ENCODE measurements at regions of chr11 and their contacts with region 1.

Region 1: GRCh38 chr11:118592616-118593367 is 14.6 kb upstream of the PHLDB1 start:
- DNase-seq: no peak
- ATAC-seq: no peak
- H3K4me3 ChIP-seq: no peak overlapping the region
- H3K4me3 Mint-ChIP-seq: no peak overlapping the region
- H3K27ac ChIP-seq: no peak overlapping the region
- H3K27ac Mint-ChIP-seq: no peak overlapping the region
- H3K4me1 ChIP-seq: no peaks in the 10 kb centered on the region
- H3K4me1 Mint-ChIP-seq: peaks cover 9% of the 10 kb centered on the region
- H3K27me3 ChIP-seq: no peaks in the 10 kb centered on the region
- H3K27me3 Mint-ChIP-seq: no peaks in the 10 kb centered on the region
- CTCF ChIP-seq: no peak

Region 2: GRCh38 chr11:118359295-118359958 is 233.4 kb before region 1 on chr11 and contains the start of gene UBE4A:
- CTCF ChIA-PET with region 1: no interaction called
- POLR2A ChIA-PET with region 1: no interaction called
- intact Hi-C with region 1: no loop called
- DNase-seq: peak; percentile 97
- ATAC-seq: peak; percentile 91
- H3K4me3 ChIP-seq: peak within 1 kb of the TSS; percentile 82 to 98 (median 92)
- H3K4me3 Mint-ChIP-seq: peak within 1 kb of the TSS; percentile 98
- H3K27ac ChIP-seq: peak within 1 kb of the TSS; percentile 73 to 93
- H3K27ac Mint-ChIP-seq: peak within 1 kb of the TSS; percentile 96
- H3K4me1 ChIP-seq: peaks cover 18 to 23% of the 10 kb centered on the region in 2 donors
- H3K4me1 Mint-ChIP-seq: peaks cover 39% of the 10 kb centered on the region
- H3K27me3 ChIP-seq: no peaks in the 10 kb centered on the region
- H3K27me3 Mint-ChIP-seq: no peaks in the 10 kb centered on the region
- CTCF ChIP-seq: no peak
- total RNA-seq, gene UBE4A: 37.3 and 37.7 TPM in 2 replicates

Region 3: DNA sequence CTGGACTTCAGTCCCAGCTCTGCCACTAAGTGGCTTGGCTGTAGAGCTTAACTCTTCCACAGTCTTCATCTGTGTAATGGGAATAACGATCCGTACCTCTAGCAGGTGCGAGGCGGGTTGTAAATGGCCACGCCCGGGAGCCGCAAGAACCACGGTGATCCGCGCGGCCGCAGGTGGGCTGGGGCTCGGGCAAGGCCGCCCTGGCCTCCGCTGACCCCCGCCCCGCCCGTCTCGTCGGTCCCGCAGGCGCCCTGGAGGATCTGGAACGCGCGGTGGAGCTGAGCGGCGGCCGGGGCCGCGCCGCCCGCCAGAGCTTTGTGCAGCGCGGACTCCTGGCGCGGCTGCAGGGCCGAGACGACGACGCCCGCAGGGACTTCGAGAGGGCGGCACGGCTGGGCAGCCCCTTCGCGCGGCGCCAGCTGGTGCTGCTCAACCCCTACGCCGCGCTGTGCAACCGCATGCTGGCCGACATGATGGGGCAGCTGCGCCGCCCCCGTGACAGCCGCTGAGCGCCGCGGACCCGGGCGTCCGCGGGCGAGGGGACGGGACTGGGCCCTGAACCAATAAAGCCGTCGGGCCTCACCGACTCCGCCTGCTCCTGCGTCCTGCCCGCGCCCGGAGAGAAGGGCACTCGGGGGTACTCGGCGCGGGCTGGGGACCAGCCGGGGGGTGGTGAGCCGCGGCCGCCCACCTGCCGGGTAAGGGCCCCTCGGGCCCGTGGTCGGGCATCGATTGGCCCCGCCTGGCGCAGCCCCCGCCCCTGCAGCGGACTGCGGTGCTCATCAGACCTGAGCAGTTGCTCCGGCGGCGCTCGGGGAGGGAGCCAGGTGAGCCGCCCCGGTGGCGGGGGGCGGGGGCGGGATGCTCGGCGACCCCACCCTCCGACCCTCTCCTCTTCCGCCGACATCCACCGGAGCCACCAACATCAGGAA is 62.1 kb before region 1 on chr11 and contains the start of gene TMEM25:
- CTCF ChIA-PET with region 1: no interaction called
- POLR2A ChIA-PET with region 1: no interaction called
- intact Hi-C with region 1: no loop called
- DNase-seq: peak; percentile 72
- ATAC-seq: peak; percentile 84
- H3K4me3 ChIP-seq: peak within 1 kb of the TSS; percentile 1 to 87 (median 73)
- H3K4me3 Mint-ChIP-seq: peak within 1 kb of the TSS; percentile 97
- H3K27ac ChIP-seq: peak within 1 kb of the TSS in 1 of 2 donors; percentile 42
- H3K27ac Mint-ChIP-seq: peak within 1 kb of the TSS; percentile 86
- H3K4me1 ChIP-seq: peaks cover 14 to 21% of the 10 kb centered on the region in 2 donors
- H3K4me1 Mint-ChIP-seq: peaks cover 24% of the 10 kb centered on the region
- H3K27me3 ChIP-seq: no peaks in the 10 kb centered on the region
- H3K27me3 Mint-ChIP-seq: no peaks in the 10 kb centered on the region
- CTCF ChIP-seq: no peak
- total RNA-seq, gene TMEM25: 16.3 and 16.9 TPM in 2 replicates

Region 4: DNA sequence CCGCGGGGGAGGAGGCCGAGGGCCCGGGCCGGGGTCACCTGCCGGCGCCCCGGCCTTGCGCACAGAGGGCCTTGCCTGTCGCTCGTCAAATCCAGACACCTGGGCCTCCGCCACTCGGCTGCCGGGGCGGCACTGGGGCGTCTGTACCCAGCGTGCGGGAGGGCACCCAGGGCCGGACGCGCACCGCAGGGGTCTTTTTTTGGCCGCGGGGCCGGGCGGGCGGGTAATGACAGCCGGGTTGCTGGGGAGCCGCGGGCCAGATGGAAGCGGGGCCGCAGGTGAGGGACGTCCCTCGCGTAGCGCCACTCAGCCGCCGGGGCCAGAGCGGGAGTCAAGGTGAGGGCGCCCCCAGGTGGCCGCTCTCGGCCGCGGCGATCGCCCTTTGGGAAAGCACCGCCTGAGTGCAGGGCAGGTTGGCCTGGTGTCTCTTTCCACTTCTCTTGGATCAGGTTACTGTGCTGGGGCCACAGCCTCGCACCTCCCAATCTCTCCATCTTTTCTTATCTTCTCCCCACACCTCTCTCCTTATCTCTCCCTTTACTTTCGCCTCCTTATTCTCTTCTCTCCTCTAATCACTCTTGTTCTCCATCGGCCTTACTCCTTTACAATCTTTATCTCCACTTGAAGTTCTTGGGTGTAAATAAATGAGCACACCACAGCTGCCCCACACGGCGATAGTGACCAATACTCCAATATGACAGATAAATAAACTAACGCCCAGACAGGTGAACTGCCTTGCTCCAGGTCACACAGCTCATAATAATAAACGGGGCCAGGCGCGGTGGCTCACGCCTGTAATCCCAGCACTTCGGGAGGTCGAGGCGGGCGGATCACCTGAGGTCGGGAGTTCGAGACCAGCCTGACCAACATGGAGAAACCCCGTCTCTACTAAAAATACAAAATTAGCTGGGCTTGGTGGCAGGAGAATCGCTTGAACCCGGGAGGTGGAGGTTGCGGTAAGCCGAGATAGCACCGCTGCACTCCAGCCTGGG is 18.3 kb after region 1 on chr11:
- CTCF ChIA-PET with region 1: interaction called, 8 read pairs
- POLR2A ChIA-PET with region 1: interaction called, 3 read pairs
- intact Hi-C with region 1: loop called (anchors 2 kb)
- DNase-seq: peak; percentile 89
- ATAC-seq: peak; percentile 59
- H3K4me3 ChIP-seq: peak overlapping the region in 4 of 5 experiments; percentile 35 to 60 (median 52)
- H3K4me3 Mint-ChIP-seq: peak overlapping the region; percentile 75
- H3K27ac ChIP-seq: no peak overlapping the region
- H3K27ac Mint-ChIP-seq: peak overlapping the region; percentile 59
- H3K4me1 ChIP-seq: peaks cover 26 to 38% of the 10 kb centered on the region in 2 donors
- H3K4me1 Mint-ChIP-seq: peaks cover 25% of the 10 kb centered on the region
- H3K27me3 ChIP-seq: peaks cover 0 to 56% (median 23%) of the 10 kb centered on the region in 4 experiments
- H3K27me3 Mint-ChIP-seq: peaks cover 28% of the 10 kb centered on the region
- CTCF ChIP-seq: peak; percentile 96

Measured in B cell (primary cell).